CD4-positive, alpha-beta T cell (primary cell): ENCODE measurements at regions of chr17 and their contacts with region 1.

Region 1: DNA sequence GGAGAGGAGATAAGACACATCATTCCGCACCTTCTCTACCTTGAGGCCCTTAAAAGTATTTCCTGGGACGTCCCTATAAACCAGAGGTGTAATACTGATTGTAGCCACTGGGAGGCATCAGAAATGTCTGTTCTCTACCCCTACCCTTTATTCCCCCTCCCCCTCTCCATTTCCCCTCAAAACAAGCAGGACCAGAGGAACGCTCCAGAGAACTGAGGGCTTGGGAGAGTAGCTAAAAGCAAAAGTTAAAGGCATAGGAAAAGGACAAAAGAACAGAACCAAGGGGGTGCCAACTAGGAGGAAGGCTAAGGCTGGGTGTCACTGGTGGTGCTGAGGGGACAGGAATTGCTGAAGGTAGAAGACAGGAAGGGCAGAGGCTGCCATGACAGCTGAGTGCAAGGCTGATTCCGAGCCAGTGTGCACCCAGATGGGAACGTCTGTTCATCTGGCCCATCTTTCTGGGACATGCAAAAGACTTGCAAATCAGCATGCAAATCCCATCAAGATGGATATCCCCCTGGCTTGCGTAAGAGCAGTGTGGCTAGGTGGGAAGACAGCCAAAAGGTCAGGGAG is 6.7 kb downstream of the CAMTA2 start:
- DNase-seq: peak in 8 of 14 experiments; percentile 21 to 83 (median 56)
- ATAC-seq: peak; percentile 96
- H3K4me3 ChIP-seq: no peak overlapping the region
- H3K4me3 Mint-ChIP-seq: peak overlapping the region; percentile 47
- H3K27ac ChIP-seq: no peak overlapping the region
- H3K27ac Mint-ChIP-seq: peak overlapping the region; percentile 16
- H3K4me1 ChIP-seq: peaks cover 24% of the 10 kb centered on the region
- H3K4me1 Mint-ChIP-seq: peaks cover 20% of the 10 kb centered on the region
- H3K27me3 ChIP-seq: no peaks in the 10 kb centered on the region
- H3K27me3 Mint-ChIP-seq: no peaks in the 10 kb centered on the region
- CTCF ChIP-seq: peak; percentile 80

Region 2: DNA sequence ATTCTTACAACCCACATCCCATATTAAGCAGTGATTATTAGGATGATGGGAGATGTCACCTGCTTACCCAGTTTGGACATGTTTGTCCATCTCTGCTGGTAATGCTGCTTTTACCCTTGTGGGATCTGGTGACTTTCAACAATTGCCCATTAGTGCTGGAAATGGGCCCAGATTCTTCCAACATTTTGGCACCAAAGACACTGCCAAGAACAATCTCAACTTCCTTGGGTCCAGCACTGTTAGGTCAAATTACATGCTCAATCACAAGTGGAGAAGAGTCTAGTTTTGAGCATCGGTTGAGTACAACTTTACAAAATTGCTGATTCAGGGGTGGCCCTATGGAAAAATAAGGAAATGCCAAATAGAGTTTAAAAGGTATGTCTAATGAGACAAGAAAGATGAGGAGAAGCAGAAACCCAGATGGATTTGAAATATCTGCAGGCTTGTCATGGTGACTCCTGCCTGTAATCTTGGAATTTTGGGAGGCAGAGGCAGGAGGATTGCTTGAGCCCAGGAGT is 84.6 kb after region 1 on chr17:
- CTCF ChIA-PET with region 1: interaction called, 5 read pairs
- POLR2A ChIA-PET with region 1: no interaction called
- intact Hi-C with region 1: loop called (anchors 1 kb)
- DNase-seq: no peak
- ATAC-seq: no peak
- H3K4me3 ChIP-seq: no peak overlapping the region
- H3K4me3 Mint-ChIP-seq: no peak overlapping the region
- H3K27ac ChIP-seq: no peak overlapping the region
- H3K27ac Mint-ChIP-seq: no peak overlapping the region
- H3K4me1 ChIP-seq: peaks cover 4% of the 10 kb centered on the region
- H3K4me1 Mint-ChIP-seq: peaks cover 5% of the 10 kb centered on the region
- H3K27me3 ChIP-seq: no peaks in the 10 kb centered on the region
- H3K27me3 Mint-ChIP-seq: no peaks in the 10 kb centered on the region
- CTCF ChIP-seq: no peak